CD4-positive, alpha-beta memory T cell (primary cell): ENCODE measurements at regions of chr10 and their contacts with region 1.

Region 1: DNA sequence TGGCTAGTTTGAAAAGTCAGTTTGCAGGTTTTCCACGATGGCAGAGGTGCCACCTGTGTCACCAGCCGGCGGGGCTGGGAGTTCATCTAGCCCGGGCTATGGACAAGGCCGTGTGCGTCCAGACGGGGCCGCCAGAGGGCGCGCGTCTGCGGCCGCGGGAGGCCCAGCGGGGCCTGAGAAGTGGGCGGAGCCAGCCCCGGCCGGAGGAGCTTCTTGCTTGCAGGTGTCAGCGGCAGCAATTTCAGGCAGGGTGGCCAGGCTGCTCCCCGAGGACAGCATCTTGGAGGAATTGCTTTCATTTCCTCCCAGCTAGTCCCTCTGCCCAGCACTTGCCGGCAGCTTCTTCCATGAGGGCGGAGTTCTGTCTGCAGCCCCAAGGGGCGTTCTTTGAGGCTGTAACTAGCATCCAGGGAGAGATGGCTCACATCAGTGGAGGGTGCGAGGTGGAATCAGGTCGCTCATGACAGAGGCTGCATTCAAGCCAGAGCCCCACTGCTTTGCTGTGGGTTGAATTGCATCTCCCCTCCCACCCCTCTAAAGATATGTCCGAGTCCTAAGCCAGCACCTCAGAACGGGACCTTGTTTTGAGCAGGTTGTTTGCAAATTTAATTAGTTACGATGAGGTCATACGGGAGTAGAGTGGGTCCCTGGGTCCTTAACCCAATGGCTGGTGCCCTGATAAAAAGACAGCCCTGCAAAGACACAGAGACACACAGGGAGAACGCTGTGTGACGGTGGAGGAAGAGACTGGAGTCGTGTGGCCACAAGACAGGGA is 85.9 kb upstream of the MKI67 start:
- DNase-seq: peak; percentile 78 to 85 (median 80)
- H3K4me3 ChIP-seq: peak overlapping the region in 1 of 2 donors; percentile 43
- H3K4me3 Mint-ChIP-seq: peak overlapping the region; percentile 85 to 96 (median 90)
- H3K27ac ChIP-seq: no peak overlapping the region
- H3K27ac Mint-ChIP-seq: peak overlapping the region; percentile 89 to 95 (median 93)
- H3K4me1 ChIP-seq: peaks cover 22% of the 10 kb centered on the region
- H3K4me1 Mint-ChIP-seq: peaks cover 9 to 24% (median 18%) of the 10 kb centered on the region in 4 donors
- H3K27me3 ChIP-seq: no peaks in the 10 kb centered on the region
- H3K27me3 Mint-ChIP-seq: no peaks in the 10 kb centered on the region

Region 2: GRCh38 chr10:128078136-128078969 is 133.8 kb before region 1 on chr10:
- CTCF ChIA-PET with region 1: no interaction called
- POLR2A ChIA-PET with region 1: interaction called, 3 read pairs
- intact Hi-C with region 1: loop called (anchors 5 kb)
- DNase-seq: peak in 3 of 5 donors; percentile 35 to 36 (median 35)
- H3K4me3 ChIP-seq: no peak overlapping the region
- H3K4me3 Mint-ChIP-seq: no peak overlapping the region
- H3K27ac ChIP-seq: no peak overlapping the region
- H3K27ac Mint-ChIP-seq: no peak overlapping the region
- H3K4me1 ChIP-seq: no peaks in the 10 kb centered on the region
- H3K4me1 Mint-ChIP-seq: peaks cover 4 to 8% (median 8%) of the 10 kb centered on the region in 4 donors
- H3K27me3 ChIP-seq: no peaks in the 10 kb centered on the region
- H3K27me3 Mint-ChIP-seq: no peaks in the 10 kb centered on the region

Region 3: DNA sequence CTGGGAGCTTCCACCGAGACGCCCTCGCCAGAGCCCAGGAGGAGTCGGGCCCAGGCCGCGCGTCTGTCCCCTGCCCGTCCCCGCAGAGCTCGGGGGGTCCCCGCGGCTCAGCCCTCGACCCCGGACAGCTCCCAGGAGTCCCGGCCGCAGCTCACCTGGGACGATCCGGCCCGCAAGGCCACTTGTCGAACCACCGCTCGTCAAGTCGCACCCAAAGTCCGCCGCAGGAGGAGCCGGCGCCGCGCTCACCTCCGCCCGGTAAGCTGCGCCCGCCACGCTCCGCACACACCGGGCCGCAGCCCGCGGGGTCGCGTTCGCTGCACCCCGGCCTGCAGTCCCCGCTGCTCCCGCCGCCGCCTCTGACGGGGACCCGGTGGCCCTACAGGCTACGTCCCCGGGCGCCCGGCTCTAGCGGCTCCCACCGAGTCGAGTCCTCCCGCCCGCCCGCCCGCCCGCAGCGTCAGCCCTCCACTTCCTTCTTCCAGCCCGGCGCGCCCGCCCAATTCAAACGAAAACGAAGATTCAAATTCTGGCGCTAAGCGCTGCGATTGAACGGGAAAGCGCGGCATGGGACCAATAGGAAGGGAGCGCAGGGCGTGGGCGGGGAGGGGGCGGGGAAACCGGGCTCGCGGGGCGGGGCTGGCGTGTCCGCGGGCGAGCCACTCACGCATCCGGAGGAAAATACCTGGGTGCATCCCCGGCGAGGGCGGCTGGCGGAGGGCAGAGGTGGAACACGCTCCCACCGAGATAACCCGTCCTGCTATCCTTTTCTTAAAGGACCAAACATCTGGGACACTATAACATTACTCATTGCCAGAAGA is 86.0 kb before region 1 on chr10 and contains the start of gene MKI67:
- CTCF ChIA-PET with region 1: interaction called, 3 read pairs
- POLR2A ChIA-PET with region 1: no interaction called
- intact Hi-C with region 1: loop called (anchors 2 kb)
- DNase-seq: peak; percentile 87 to 92 (median 88)
- H3K4me3 ChIP-seq: peak within 1 kb of the TSS; percentile 70 to 71
- H3K4me3 Mint-ChIP-seq: peak within 1 kb of the TSS; percentile 90 to 96 (median 93)
- H3K27ac ChIP-seq: peak within 1 kb of the TSS; percentile 72
- H3K27ac Mint-ChIP-seq: peak within 1 kb of the TSS; percentile 71 to 95 (median 90)
- H3K4me1 ChIP-seq: peaks cover 42% of the 10 kb centered on the region
- H3K4me1 Mint-ChIP-seq: peaks cover 11 to 37% (median 30%) of the 10 kb centered on the region in 4 donors
- H3K27me3 ChIP-seq: peaks cover 12% of the 10 kb centered on the region
- H3K27me3 Mint-ChIP-seq: peaks cover 6 to 20% of the 10 kb centered on the region in 2 donors
- total RNA-seq, gene MKI67: 0.17 to 0.93 TPM

Region 4: GRCh38 chr10:128178319-128178958 is 33.7 kb before region 1 on chr10:
- CTCF ChIA-PET with region 1: interaction called, 223 read pairs
- POLR2A ChIA-PET with region 1: interaction called, 32 read pairs
- intact Hi-C with region 1: loop called (anchors 1 kb)
- DNase-seq: peak in 4 of 5 donors; percentile 29 to 46 (median 40)
- H3K4me3 ChIP-seq: no peak overlapping the region
- H3K4me3 Mint-ChIP-seq: peak overlapping the region in 1 of 8 donors; percentile 26
- H3K27ac ChIP-seq: no peak overlapping the region
- H3K27ac Mint-ChIP-seq: peak overlapping the region in 1 of 7 donors; percentile 50
- H3K4me1 ChIP-seq: peaks cover 28% of the 10 kb centered on the region
- H3K4me1 Mint-ChIP-seq: peaks cover 21 to 41% (median 30%) of the 10 kb centered on the region in 4 donors
- H3K27me3 ChIP-seq: no peaks in the 10 kb centered on the region
- H3K27me3 Mint-ChIP-seq: peaks cover 0 to 1% of the 10 kb centered on the region in 2 donors

Region 5: GRCh38 chr10:128186959-128187787 is 25.0 kb before region 1 on chr10:
- CTCF ChIA-PET with region 1: interaction called, 223 read pairs
- POLR2A ChIA-PET with region 1: interaction called, 36 read pairs
- intact Hi-C with region 1: no loop called
- DNase-seq: peak in 3 of 5 donors; percentile 24 to 37 (median 28)
- H3K4me3 ChIP-seq: peak overlapping the region; percentile 34 to 46
- H3K4me3 Mint-ChIP-seq: peak overlapping the region; percentile 85 to 93 (median 88)
- H3K27ac ChIP-seq: peak overlapping the region; percentile 50
- H3K27ac Mint-ChIP-seq: peak overlapping the region; percentile 87 to 97 (median 92)
- H3K4me1 ChIP-seq: peaks cover 13% of the 10 kb centered on the region
- H3K4me1 Mint-ChIP-seq: peaks cover 23 to 44% (median 31%) of the 10 kb centered on the region in 4 donors
- H3K27me3 ChIP-seq: no peaks in the 10 kb centered on the region
- H3K27me3 Mint-ChIP-seq: no peaks in the 10 kb centered on the region

Region 6: GRCh38 chr10:129466703-129467358 is 1254.7 kb after region 1 on chr10 and contains the start of gene MGMT:
- CTCF ChIA-PET with region 1: no interaction called
- POLR2A ChIA-PET with region 1: no interaction called
- intact Hi-C with region 1: loop called (anchors 5 kb)
- DNase-seq: peak; percentile 94 to 98 (median 95)
- H3K4me3 ChIP-seq: peak within 1 kb of the TSS; percentile 20 to 80
- H3K4me3 Mint-ChIP-seq: peak within 1 kb of the TSS; percentile 82 to 90 (median 86)
- H3K27ac ChIP-seq: peak within 1 kb of the TSS; percentile 68
- H3K27ac Mint-ChIP-seq: peak within 1 kb of the TSS; percentile 78 to 88 (median 84)
- H3K4me1 ChIP-seq: peaks cover 17% of the 10 kb centered on the region
- H3K4me1 Mint-ChIP-seq: peaks cover 7 to 27% (median 14%) of the 10 kb centered on the region in 4 donors
- H3K27me3 ChIP-seq: no peaks in the 10 kb centered on the region
- H3K27me3 Mint-ChIP-seq: peaks cover 0 to 2% of the 10 kb centered on the region in 2 donors
- total RNA-seq, gene MGMT: 18.5 to 21.2 TPM

Region 7: GRCh38 chr10:130127364-130128061 is 1915.4 kb after region 1 on chr10:
- CTCF ChIA-PET with region 1: interaction called, 3 read pairs
- POLR2A ChIA-PET with region 1: no interaction called
- intact Hi-C with region 1: loop called (anchors 2 kb)
- DNase-seq: peak; percentile 38 to 55 (median 53)
- H3K4me3 ChIP-seq: no peak overlapping the region
- H3K4me3 Mint-ChIP-seq: no peak overlapping the region
- H3K27ac ChIP-seq: no peak overlapping the region
- H3K27ac Mint-ChIP-seq: no peak overlapping the region
- H3K4me1 ChIP-seq: peaks cover 5% of the 10 kb centered on the region
- H3K4me1 Mint-ChIP-seq: peaks cover 4 to 5% (median 5%) of the 10 kb centered on the region in 4 donors
- H3K27me3 ChIP-seq: peaks cover 12% of the 10 kb centered on the region
- H3K27me3 Mint-ChIP-seq: peaks cover 11 to 15% of the 10 kb centered on the region in 2 donors